Right cardiac atrium (tissue), 5 donors: ENCODE measurements at regions of chr20 and their contacts with region 1.

Region 1: DNA sequence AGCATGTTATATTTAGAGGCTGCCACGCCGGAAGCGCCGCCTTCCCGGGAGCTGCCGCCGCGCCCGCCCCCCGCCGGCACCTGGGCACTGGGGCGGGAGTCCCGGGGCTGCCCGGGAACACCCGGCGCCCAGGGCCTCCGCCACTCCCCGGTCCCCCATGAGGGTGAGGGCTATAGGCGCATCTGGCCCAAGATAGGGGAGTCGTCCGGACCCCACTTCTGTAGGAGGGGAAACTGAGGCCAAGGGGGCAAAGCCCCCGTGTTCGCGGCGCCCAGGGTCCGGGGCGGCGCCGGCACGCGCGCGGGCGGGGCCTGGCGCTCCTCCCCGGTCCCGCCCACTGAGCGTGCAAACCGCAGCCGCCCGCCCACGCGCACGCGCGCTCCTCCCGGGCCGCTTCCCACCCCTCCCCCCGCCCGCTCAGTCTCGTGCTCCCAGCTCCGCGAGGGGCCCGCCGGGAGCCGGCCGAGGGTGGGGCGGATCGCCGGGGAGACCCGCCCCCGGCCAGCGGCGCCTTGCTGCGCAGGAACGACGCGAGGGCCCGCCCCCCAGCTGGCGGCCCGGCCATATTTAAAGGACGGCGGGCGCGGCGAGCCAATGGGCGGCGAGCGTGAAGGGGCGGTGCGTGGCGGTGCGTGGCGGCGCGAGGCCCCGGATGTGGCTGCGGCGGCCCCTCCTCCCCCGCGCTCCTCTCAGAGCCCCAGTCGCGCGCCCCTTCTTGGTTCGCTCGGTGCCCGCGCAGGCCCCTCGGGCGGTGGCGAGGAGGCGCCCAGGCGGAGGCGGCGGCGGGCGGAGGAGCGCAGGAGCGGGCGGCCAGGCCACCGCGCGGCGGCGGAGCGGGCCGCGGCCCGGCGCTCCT is at the start of gene LSM14B:
- DNase-seq: peak; percentile 97 to 99 (median 99)
- ATAC-seq: peak; percentile 95
- H3K4me3 ChIP-seq: peak within 1 kb of the TSS; percentile 88
- H3K27ac ChIP-seq: peak within 1 kb of the TSS; percentile 98
- H3K4me1 ChIP-seq: peaks cover 6% of the 10 kb centered on the region
- H3K27me3 ChIP-seq: no peaks in the 10 kb centered on the region
- total RNA-seq, gene LSM14B: 32.9 to 45.7 (median 40.9) TPM

Region 2: DNA sequence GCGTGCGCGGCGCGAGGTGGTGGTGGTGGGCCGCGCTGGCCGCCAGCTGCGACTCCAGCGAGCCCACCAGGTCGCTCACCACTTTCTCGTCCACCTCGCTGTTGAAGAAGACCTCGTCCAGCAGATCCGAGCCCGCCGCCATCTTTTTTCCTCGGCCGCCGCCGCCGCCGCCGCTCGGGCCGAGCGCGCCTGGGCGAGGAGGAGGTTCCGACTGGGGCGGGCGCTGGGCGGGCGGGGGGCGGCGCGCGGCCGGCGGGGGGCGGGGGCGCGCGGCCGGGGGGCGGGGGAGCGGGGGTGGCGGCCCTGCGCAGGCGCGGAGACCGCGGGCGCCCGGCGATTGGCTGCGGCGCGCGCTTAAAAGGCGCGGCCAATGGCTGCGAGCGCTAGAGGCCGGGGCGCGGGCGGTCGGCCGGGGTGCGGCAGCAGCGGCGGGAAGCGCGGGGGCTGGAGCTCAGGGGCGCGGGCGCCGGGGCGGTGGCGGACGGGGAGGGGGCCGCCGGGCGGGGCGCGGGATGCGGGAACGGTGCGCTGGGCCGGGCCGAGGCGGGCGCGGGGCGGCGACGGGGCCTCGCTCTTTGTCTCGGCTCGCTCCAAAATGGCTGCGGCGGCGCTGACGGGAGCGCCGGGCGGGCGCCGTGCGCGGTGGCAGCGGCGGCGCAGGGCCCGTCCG is 56.2 kb before region 1 on chr20 and contains the start of gene TAF4:
- intact Hi-C with region 1: loop called (anchors 5 to 10 kb)
- DNase-seq: peak; percentile 76 to 92 (median 92)
- ATAC-seq: peak; percentile 58 to 71
- H3K4me3 ChIP-seq: peak within 1 kb of the TSS; percentile 82
- H3K27ac ChIP-seq: peak within 1 kb of the TSS; percentile 44
- H3K4me1 ChIP-seq: peaks cover 6% of the 10 kb centered on the region
- H3K27me3 ChIP-seq: no peaks in the 10 kb centered on the region
- total RNA-seq, gene TAF4: 7.0 to 13.6 (median 8.6) TPM